ENCODE measurements at regions of chr5 and their contacts with region 1.

Region 1: GRCh38 chr5:34486160-34486848 is 169.8 kb upstream of the RAI14 start:
- DNase-seq: peak; percentile 86
- ATAC-seq: peak; percentile 90

Region 2: DNA sequence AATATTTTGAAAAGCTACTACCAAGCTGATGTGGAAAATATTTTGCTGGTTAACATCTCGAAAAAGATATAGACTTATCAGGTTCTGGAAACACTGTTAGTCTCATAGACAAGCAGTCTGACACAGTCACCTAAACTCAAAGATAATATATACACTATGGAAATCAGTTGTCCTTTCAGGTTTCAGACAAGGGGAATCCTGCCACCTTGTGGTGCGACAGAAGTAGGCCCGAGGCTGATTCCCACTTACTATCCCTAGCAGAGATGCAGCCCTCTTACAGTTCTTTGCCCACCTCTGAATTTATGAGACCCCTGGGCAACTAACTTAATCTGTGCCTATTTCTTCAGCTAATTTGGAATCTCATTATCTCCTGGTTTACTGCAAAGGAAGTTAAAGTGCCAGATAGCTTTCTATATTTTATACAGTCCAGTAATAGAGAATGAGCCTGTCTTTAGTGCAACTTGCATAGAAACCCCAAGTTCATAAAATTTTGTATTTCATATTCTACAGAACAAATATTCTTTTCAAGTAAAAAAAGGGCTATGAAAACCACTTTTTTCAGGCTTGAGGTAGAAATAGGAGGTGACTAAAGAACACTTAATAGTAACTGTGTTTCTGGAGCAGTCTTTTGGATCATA is 412.1 kb after region 1 on chr5:
- intact Hi-C with region 1: loop called (anchors 5 kb)
- DNase-seq: peak; percentile 50
- ATAC-seq: peak; percentile 88

Region 3: DNA sequence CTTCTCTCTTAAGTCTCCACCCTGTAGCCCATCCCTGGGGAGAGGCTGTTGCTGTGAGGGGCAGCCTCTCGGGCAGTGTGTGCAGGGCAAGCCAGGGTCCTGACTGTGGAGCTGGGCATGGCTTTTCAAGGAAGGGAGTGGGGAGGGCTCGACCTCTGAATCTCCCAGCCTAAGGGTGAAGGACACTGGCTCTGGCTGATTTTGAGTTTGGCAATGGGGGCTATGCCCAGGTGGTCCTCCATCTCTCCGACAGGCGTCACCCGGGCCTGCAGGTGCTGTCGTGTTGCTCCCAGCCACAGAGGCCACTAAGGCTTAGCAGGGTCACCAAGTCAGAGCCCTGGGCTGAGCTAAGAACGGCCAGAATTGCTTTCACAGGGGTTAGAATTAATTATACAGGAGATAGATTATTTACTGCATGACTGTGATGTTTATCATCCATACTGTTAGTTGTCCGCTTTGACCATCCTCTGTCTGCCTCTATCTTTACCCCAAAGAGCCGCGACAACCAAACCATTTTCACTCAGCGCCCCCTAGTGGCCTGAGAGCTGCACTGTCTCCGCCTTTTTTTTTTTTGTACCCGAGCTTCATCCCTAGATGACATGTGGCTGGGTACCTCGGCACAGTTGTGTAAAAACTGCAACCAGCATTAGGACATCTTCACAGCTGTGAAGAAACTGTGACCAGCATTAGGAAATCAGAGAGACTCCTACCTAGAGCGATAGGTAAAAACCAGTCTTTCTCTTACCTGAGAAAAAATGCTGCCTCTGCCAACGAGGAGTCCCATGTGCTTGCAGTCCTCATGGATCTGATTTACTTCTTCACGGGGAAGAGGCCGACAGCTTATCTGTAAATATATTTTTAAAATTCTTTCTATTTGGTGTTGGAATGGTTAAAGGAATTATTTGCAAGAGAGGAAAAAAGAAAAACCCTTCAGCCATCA is 517.0 kb after region 1 on chr5:
- intact Hi-C with region 1: loop called (anchors 10 kb)
- DNase-seq: peak; percentile 48
- ATAC-seq: peak; percentile 67

Measured in Right ventricle myocardium superior (tissue), 1 donor.